ENCODE measurements at regions of chr16 and their contacts with region 1.

Region 1: DNA sequence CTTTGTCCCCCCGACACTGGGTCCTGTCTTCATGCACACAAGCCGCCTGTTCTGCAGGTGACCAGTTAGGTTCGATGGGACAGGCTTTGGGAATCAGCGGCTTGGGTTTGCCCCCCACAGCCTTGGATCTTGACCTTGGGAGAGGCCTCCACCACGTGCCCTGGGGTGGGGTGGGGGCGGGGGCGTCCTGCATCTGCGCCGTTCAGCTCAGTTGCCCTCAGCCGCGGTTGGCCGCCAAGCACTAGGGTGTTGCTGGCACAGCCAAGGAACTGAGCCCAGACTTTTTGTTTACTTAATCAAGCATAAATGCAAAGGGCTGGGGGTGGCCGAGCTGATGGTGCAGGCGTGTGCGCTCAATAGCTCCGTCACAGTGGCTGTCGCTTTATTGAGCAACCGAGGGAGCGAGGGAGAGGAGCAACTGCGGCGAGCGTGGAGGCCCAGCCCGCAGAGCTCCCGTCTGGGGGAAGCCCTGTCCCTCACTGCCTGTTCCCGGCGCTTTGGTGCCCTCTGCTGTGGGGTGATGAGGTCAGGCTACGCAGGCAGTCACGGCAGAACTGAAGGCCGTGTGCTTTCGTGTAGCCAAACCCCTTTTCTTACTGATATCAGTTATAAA is 33.9 kb downstream of the JPH3 start:
- DNase-seq: peak; percentile 82
- ATAC-seq: peak; percentile 81
- H3K4me3 ChIP-seq: peak overlapping the region in 4 of 5 experiments; percentile 28 to 55 (median 50)
- H3K4me3 Mint-ChIP-seq: peak overlapping the region; percentile 90
- H3K27ac ChIP-seq: peak overlapping the region; percentile 26 to 49
- H3K27ac Mint-ChIP-seq: peak overlapping the region; percentile 84
- H3K4me1 ChIP-seq: peaks cover 13 to 23% of the 10 kb centered on the region in 2 donors
- H3K4me1 Mint-ChIP-seq: peaks cover 18% of the 10 kb centered on the region
- H3K27me3 ChIP-seq: peaks cover 0 to 7% (median 0%) of the 10 kb centered on the region in 4 experiments
- H3K27me3 Mint-ChIP-seq: peaks cover 16% of the 10 kb centered on the region
- CTCF ChIP-seq: peak; percentile 66

Region 2: DNA sequence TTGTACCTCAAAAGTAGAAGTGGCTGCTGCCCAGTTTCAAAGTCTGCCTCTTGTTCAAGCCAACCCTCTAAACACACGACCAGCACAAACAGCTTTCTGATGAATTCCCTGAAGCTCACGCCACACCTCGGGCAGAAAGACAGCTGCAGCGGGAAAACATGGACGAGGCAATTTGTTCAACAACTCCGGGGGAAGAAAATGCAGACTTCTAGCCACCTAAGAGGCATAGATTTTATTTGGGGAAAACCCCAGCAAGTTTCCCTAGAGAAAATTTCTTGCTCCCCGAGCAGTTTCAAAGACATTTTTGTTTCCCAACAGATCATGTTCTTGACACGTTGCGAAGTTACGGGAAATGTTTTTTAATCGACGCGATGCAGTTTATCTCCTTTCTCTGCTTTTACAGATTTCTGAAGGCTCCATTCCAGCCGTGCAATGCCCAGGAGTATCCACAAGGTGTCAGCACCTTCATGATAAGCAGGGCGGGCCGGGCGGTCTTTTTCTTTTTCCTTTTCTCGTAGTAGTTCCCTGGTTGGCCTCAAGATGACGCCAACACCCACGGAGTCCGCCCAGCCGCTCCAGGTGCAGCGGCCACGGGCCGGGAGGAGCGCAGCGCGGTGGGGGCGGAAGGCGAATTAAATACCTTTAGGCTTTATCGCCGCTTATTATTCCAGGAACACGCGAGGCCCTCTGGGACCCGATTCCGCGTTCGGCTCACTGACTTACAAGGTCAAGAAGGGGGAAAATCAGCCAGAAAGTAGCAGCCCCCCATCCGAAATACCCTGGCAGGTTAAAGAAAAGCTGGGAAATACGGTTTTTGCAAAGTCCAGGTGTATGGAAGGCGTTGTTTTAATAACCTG is 1072.5 kb before region 1 on chr16:
- CTCF ChIA-PET with region 1: interaction called, 27 read pairs
- POLR2A ChIA-PET with region 1: no interaction called
- intact Hi-C with region 1: no loop called
- DNase-seq: peak; percentile 92
- ATAC-seq: peak; percentile 100
- H3K4me3 ChIP-seq: peak overlapping the region in 2 of 5 experiments; percentile 37 to 53
- H3K4me3 Mint-ChIP-seq: peak overlapping the region; percentile 48
- H3K27ac ChIP-seq: no peak overlapping the region
- H3K27ac Mint-ChIP-seq: no peak overlapping the region
- H3K4me1 ChIP-seq: peaks cover 26 to 37% of the 10 kb centered on the region in 2 donors
- H3K4me1 Mint-ChIP-seq: peaks cover 22% of the 10 kb centered on the region
- H3K27me3 ChIP-seq: peaks cover 0 to 67% (median 29%) of the 10 kb centered on the region in 4 experiments
- H3K27me3 Mint-ChIP-seq: peaks cover 48% of the 10 kb centered on the region
- CTCF ChIP-seq: peak; percentile 100

Region 3: DNA sequence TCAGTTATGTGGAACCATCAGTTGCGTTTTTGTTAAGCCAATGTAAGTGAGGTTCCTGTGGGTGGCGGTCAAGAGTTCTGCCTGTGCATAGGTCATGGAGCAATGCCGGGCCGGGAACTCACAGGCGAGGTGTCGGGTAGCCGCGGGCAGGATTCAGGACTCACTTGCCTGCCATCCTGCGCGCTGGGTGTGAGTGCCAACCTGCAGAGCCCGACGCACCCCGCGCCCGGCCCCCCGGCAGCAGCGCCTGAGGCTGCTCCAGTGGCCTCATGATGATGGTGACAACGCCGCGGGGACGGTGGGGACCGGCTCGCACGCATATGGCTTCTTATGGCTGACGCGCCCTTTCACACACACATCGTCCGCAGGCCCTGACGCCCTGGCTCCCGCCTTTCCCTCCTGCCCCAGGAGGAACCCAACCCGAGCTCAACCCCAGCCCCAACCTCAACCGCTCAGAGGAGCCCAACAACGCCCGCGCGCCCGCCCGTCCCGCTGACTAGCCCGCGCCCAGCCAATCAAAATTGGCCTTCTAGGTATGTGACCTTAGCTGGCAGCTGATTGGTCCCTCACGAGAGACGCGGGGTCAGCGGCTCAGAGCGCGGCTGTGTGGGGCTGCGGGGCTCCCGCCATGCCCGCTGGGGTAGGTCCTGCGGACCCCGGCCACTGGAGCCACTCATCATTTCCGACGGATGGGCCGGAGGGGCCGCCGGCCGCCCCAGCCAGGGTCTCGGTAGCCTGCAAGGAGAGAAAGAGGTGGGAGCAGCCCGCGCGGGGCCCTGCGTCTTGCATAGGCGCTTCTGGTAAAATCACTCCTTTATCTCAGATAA is 319.0 kb before region 1 on chr16 and contains the start of gene C16orf95:
- CTCF ChIA-PET with region 1: interaction called, 12 read pairs
- POLR2A ChIA-PET with region 1: interaction called, 3 read pairs
- intact Hi-C with region 1: no loop called
- DNase-seq: peak; percentile 97
- ATAC-seq: peak; percentile 89
- H3K4me3 ChIP-seq: peak within 1 kb of the TSS; percentile 73 to 99 (median 94)
- H3K4me3 Mint-ChIP-seq: peak within 1 kb of the TSS; percentile 96
- H3K27ac ChIP-seq: peak within 1 kb of the TSS; percentile 64 to 84
- H3K27ac Mint-ChIP-seq: peak within 1 kb of the TSS; percentile 97
- H3K4me1 ChIP-seq: peaks cover 8 to 10% of the 10 kb centered on the region in 2 donors
- H3K4me1 Mint-ChIP-seq: peaks cover 12% of the 10 kb centered on the region
- H3K27me3 ChIP-seq: no peaks in the 10 kb centered on the region
- H3K27me3 Mint-ChIP-seq: no peaks in the 10 kb centered on the region
- CTCF ChIP-seq: peak; percentile 61
- total RNA-seq, gene C16orf95: 2.3 and 2.5 TPM in 2 replicates

Region 4: GRCh38 chr16:87416826-87417527 is 219.2 kb before region 1 on chr16:
- CTCF ChIA-PET with region 1: interaction called, 35 read pairs
- POLR2A ChIA-PET with region 1: no interaction called
- intact Hi-C with region 1: no loop called
- DNase-seq: no peak
- ATAC-seq: no peak
- H3K4me3 ChIP-seq: no peak overlapping the region
- H3K4me3 Mint-ChIP-seq: no peak overlapping the region
- H3K27ac ChIP-seq: no peak overlapping the region
- H3K27ac Mint-ChIP-seq: no peak overlapping the region
- H3K4me1 ChIP-seq: no peaks in the 10 kb centered on the region
- H3K4me1 Mint-ChIP-seq: no peaks in the 10 kb centered on the region
- H3K27me3 ChIP-seq: peaks cover 0 to 3% (median 0%) of the 10 kb centered on the region in 4 experiments
- H3K27me3 Mint-ChIP-seq: no peaks in the 10 kb centered on the region
- CTCF ChIP-seq: peak; percentile 61

Region 5: DNA sequence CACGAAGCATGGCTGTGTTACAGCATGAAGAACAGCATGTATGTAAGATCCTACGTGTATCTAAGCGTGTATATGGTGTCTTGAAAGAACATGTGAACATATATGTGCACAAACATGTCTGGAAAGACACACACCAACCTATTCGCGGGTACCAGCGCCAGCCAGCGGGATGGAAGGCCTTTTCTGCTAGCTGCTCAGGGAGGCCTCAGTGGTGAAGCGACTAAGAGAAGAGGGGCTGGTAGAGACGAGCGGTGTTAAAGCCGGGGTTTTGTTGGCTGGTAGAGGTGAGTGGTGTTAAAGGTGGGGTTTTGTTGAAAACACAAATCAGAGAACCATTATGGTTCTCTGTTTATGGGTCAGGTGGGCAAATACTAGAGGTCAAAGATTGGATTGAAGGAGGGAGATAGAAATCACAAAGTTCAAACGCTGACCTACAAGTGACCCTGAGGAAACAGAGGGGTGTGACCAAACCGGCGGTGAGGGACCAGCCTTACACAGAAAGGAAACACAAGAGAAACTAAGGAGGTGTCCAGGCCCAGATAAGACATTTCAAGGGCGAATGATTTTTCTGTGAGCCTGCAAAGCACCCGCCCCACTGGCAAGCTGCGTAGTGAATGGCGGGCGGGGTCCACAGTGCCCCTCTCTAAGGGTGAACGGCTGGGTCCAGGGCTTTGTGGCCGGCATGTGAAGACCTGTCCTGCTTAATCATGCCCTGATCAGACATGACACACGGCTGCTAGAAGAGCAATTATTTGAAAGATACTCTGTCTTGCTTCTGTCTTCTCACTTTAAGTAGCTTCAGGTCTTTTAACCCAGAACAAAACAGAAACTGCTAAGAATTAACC is 151.5 kb before region 1 on chr16:
- CTCF ChIA-PET with region 1: no interaction called
- POLR2A ChIA-PET with region 1: no interaction called
- intact Hi-C with region 1: no loop called
- DNase-seq: no peak
- ATAC-seq: no peak
- H3K4me3 ChIP-seq: no peak overlapping the region
- H3K4me3 Mint-ChIP-seq: no peak overlapping the region
- H3K27ac ChIP-seq: no peak overlapping the region
- H3K27ac Mint-ChIP-seq: no peak overlapping the region
- H3K4me1 ChIP-seq: no peaks in the 10 kb centered on the region
- H3K4me1 Mint-ChIP-seq: peaks cover 2% of the 10 kb centered on the region
- H3K27me3 ChIP-seq: peaks cover 0 to 8% (median 1%) of the 10 kb centered on the region in 4 experiments
- H3K27me3 Mint-ChIP-seq: peaks cover 24% of the 10 kb centered on the region
- CTCF ChIP-seq: no peak

Region 6: GRCh38 chr16:87550496-87550961 is 85.6 kb before region 1 on chr16:
- CTCF ChIA-PET with region 1: interaction called, 40 read pairs
- POLR2A ChIA-PET with region 1: no interaction called
- intact Hi-C with region 1: no loop called
- DNase-seq: peak; percentile 64
- ATAC-seq: peak; percentile 73
- H3K4me3 ChIP-seq: no peak overlapping the region
- H3K4me3 Mint-ChIP-seq: no peak overlapping the region
- H3K27ac ChIP-seq: no peak overlapping the region
- H3K27ac Mint-ChIP-seq: no peak overlapping the region
- H3K4me1 ChIP-seq: no peaks in the 10 kb centered on the region
- H3K4me1 Mint-ChIP-seq: no peaks in the 10 kb centered on the region
- H3K27me3 ChIP-seq: peaks cover 0 to 2% (median 0%) of the 10 kb centered on the region in 4 experiments
- H3K27me3 Mint-ChIP-seq: peaks cover 43% of the 10 kb centered on the region
- CTCF ChIP-seq: peak; percentile 93

Region 7: DNA sequence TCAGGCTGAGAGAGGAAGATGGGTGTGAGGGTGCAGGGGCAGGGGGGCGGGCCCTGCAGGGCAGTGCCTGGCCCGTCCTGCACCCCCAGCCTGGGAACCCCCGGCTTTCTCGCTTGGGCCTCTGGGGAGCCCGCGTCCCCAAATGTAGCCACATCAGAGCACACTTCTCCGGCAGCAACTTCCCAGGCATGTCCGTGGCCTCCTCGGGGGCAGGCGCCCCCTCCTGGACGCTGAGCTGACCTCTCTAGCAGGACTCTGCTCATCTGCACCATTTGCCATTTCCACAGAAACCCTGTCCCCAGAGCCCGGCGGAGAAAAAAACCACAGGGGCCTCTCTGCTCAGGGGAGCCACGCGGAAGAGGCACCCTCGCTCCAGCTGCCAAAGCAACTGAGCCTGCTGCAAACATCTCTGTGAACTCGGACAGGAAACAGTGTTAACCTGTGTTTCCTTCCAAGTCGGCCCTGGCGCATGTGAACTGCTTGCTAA is 66.2 kb after region 1 on chr16:
- CTCF ChIA-PET with region 1: interaction called, 26 read pairs
- POLR2A ChIA-PET with region 1: interaction called, 9 read pairs
- intact Hi-C with region 1: loop called (anchors 1 kb)
- DNase-seq: peak; percentile 74
- ATAC-seq: peak; percentile 51
- H3K4me3 ChIP-seq: peak overlapping the region in 1 of 5 experiments; percentile 38
- H3K4me3 Mint-ChIP-seq: peak overlapping the region; percentile 63
- H3K27ac ChIP-seq: peak overlapping the region; percentile 79 to 80
- H3K27ac Mint-ChIP-seq: peak overlapping the region; percentile 91
- H3K4me1 ChIP-seq: peaks cover 45 to 67% of the 10 kb centered on the region in 2 donors
- H3K4me1 Mint-ChIP-seq: peaks cover 56% of the 10 kb centered on the region
- H3K27me3 ChIP-seq: no peaks in the 10 kb centered on the region
- H3K27me3 Mint-ChIP-seq: no peaks in the 10 kb centered on the region
- CTCF ChIP-seq: peak; percentile 45

Measured in B cell (primary cell).